Activated CD4-positive, alpha-beta T cell treated with anti-CD3 and anti-CD28 coated beads, Interleukin-2, amount 10 ng/mL, durations not matched to agents 24 days and 14 days (primary cell): ENCODE measurements at regions of chr1 and their contacts with region 1.

Region 1: GRCh38 chr1:183655562-183656075 is 2.5 kb upstream of the APOBEC4 start:
- DNase-seq: peak; percentile 92
- H3K4me3 Mint-ChIP-seq: no peak overlapping the region
- H3K27ac Mint-ChIP-seq: peak overlapping the region; percentile 30
- H3K4me1 Mint-ChIP-seq: peaks cover 35% of the 10 kb centered on the region
- H3K27me3 Mint-ChIP-seq: peaks cover 4% of the 10 kb centered on the region

Region 2: GRCh38 chr1:183685112-183685713 is 29.6 kb after region 1 on chr1:
- intact Hi-C with region 1: loop called (anchors 1 kb)
- DNase-seq: peak; percentile 78
- H3K4me3 Mint-ChIP-seq: no peak overlapping the region
- H3K27ac Mint-ChIP-seq: no peak overlapping the region
- H3K4me1 Mint-ChIP-seq: peaks cover 11% of the 10 kb centered on the region
- H3K27me3 Mint-ChIP-seq: peaks cover 30% of the 10 kb centered on the region

Region 3: GRCh38 chr1:183896466-183897048 is 240.9 kb after region 1 on chr1:
- intact Hi-C with region 1: no loop called
- DNase-seq: no peak
- H3K4me3 Mint-ChIP-seq: no peak overlapping the region
- H3K27ac Mint-ChIP-seq: no peak overlapping the region
- H3K4me1 Mint-ChIP-seq: peaks cover 10% of the 10 kb centered on the region
- H3K27me3 Mint-ChIP-seq: no peaks in the 10 kb centered on the region

Region 4: GRCh38 chr1:184051485-184052193 is 396.0 kb after region 1 on chr1 and contains the start of gene TSEN15:
- intact Hi-C with region 1: loop called (anchors 5 kb)
- DNase-seq: peak; percentile 93
- H3K4me3 Mint-ChIP-seq: peak within 1 kb of the TSS; percentile 96
- H3K27ac Mint-ChIP-seq: peak within 1 kb of the TSS; percentile 98
- H3K4me1 Mint-ChIP-seq: peaks cover 30% of the 10 kb centered on the region
- H3K27me3 Mint-ChIP-seq: peaks cover 25% of the 10 kb centered on the region
- total RNA-seq, gene TSEN15: 44.9 and 48.3 TPM in 2 replicates

Region 5: GRCh38 chr1:184222652-184223052 is 567.0 kb after region 1 on chr1:
- intact Hi-C with region 1: loop called (anchors 10 kb)
- DNase-seq: peak; percentile 82
- H3K4me3 Mint-ChIP-seq: no peak overlapping the region
- H3K27ac Mint-ChIP-seq: no peak overlapping the region
- H3K4me1 Mint-ChIP-seq: peaks cover 4% of the 10 kb centered on the region
- H3K27me3 Mint-ChIP-seq: peaks cover 12% of the 10 kb centered on the region